HepG2 (cell line): ENCODE measurements at regions of chr6 and their contacts with region 1.

Region 1: GRCh38 chr6:136387316-136387715 is 97.7 kb upstream of the BCLAF1 start:
- DNase-seq: no peak
- ATAC-seq: no peak
- H3K4me3 ChIP-seq: no peak overlapping the region
- H3K27ac ChIP-seq: no peak overlapping the region
- H3K4me1 ChIP-seq: no peaks in the 10 kb centered on the region
- H3K27me3 ChIP-seq: no peaks in the 10 kb centered on the region
- CTCF ChIP-seq: no peak
- EP300 ChIP-seq: no peak
- POLR2A ChIP-seq: no peak
- RAD21 ChIP-seq: no peak

Region 2: DNA sequence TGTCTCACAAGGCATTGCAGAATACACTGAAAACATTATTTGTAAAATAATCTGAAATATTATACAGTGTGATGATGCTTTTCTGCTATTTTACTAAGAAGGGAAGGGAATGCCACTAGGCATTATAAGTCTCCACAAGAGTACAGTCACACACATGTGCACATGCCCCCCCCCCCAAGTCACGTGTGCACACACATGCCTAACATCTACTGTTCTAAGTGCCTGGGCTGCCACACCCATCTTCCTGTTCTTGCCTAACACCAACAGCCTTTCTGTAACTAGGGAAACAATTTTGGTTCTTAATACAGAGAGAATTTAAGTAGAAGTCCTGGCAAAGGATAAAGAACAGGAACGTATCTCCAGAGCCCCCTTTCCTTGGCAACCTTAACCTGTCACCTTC is 39.5 kb before region 1 on chr6:
- CTCF ChIA-PET with region 1: no interaction called
- POLR2A ChIA-PET with region 1: no interaction called
- in situ Hi-C with region 1: no loop called
- intact Hi-C with region 1: no loop called
- DNase-seq: no peak
- ATAC-seq: no peak
- H3K4me3 ChIP-seq: no peak overlapping the region
- H3K27ac ChIP-seq: no peak overlapping the region
- H3K4me1 ChIP-seq: no peaks in the 10 kb centered on the region
- H3K27me3 ChIP-seq: peaks cover 0 to 3% of the 10 kb centered on the region in 2 experiments; a peak in 1 of 5 replicates
- CTCF ChIP-seq: no peak
- EP300 ChIP-seq: no peak
- POLR2A ChIP-seq: no peak
- RAD21 ChIP-seq: no peak

Region 3: DNA sequence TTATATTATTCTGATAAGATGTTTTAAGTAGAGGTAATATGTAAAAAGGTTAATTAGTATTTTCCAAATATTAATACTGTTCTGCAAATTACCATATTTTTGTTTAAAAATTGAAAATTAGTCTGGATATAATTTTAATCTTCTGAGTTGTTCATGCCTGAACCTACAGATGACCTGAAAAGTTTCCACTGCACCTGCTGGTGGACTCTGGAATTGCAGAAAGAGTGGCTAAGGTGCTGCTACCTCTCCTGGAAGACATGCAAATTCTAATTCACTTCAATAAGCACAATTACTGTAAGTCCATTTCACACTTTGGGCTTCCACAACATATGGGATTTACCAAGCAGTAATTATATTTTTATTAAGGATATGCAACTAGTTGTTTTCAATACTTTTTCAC is 1184.5 kb after region 1 on chr6:
- CTCF ChIA-PET with region 1: no interaction called
- POLR2A ChIA-PET with region 1: no interaction called
- in situ Hi-C with region 1: no loop called
- intact Hi-C with region 1: loop called (anchors 5 kb)
- DNase-seq: peak; percentile 54
- ATAC-seq: peak; percentile 78
- H3K4me3 ChIP-seq: no peak overlapping the region
- H3K27ac ChIP-seq: no peak overlapping the region
- H3K4me1 ChIP-seq: peaks cover 8% of the 10 kb centered on the region
- H3K27me3 ChIP-seq: peaks cover 0 to 2% of the 10 kb centered on the region in 2 experiments; a peak in 1 of 5 replicates
- CTCF ChIP-seq: peak; percentile 45
- EP300 ChIP-seq: no peak
- POLR2A ChIP-seq: no peak
- RAD21 ChIP-seq: no peak